Heart left ventricle (tissue), 16 donors: ENCODE measurements at regions of chr10 and their contacts with region 1.

Region 1: GRCh38 chr10:76036111-76036940 is 604.9 kb downstream of the LRMDA start:
- DNase-seq: peak; percentile 72 to 86 (median 74)
- ATAC-seq: peak; percentile 79 to 94 (median 90)
- H3K4me3 ChIP-seq: peak overlapping the region in 6 of 12 donors; percentile 25 to 49 (median 38)
- H3K27ac ChIP-seq: peak overlapping the region in 1 of 12 donors; percentile 14
- H3K4me1 ChIP-seq: peaks cover 0 to 19% (median 7%) of the 10 kb centered on the region in 12 donors
- H3K27me3 ChIP-seq: no peaks in the 10 kb centered on the region
- CTCF ChIP-seq: peak; percentile 86 to 97 (median 94)
- POLR2A ChIP-seq: no peak

Region 2: GRCh38 chr10:75395066-75395931 is 641.0 kb before region 1 on chr10:
- intact Hi-C with region 1: loop called (anchors 1 to 5 kb)
- DNase-seq: peak; percentile 40 to 82 (median 56)
- ATAC-seq: peak in 3 of 4 donors; percentile 38 to 49 (median 40)
- H3K4me3 ChIP-seq: peak overlapping the region; percentile 21 to 96 (median 60)
- H3K27ac ChIP-seq: peak overlapping the region in 11 of 12 donors; percentile 2 to 100 (median 81)
- H3K4me1 ChIP-seq: peaks cover 0 to 42% (median 13%) of the 10 kb centered on the region in 12 donors
- H3K27me3 ChIP-seq: peaks cover 0 to 23% (median 0%) of the 10 kb centered on the region in 9 donors
- CTCF ChIP-seq: peak; percentile 84 to 98 (median 92)
- POLR2A ChIP-seq: no peak

Region 3: DNA sequence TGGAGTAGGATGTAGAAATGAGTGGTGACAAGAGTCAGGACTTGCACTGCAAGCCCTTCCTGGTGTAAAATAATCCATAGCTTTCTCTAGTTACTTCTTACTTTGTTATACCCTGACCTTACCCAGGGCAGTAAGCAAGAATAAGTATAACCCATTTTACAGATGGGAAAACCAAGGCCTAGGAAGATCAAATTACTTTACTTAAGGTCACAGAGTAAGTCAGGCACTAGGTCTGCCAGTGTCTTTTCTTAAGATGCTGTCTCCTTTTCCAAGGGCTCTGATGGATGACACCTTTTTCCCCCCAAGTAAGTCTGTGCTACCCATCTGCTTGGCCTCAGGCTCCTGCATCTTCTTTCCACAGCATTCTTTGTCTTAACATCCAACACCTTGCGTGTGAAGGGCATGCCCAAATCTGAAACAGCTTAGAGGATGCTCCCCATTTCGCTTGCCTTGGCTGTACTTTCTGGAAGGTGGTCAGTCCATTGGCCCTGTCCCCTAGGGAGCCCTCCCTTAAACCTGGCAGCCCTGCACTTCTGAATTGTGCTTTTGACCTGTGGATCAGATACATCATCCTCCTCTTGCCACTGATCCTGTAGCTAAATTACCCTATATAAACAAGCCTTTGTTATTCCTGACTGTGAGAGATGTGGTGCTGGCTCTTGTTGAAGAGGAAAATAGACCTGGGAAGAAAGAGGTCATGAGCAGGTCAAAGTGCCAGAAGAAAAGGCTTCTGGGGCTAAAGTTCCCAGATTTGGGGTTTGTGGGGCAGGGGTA is 436.3 kb before region 1 on chr10:
- intact Hi-C with region 1: no loop called
- DNase-seq: no peak
- ATAC-seq: no peak
- H3K4me3 ChIP-seq: no peak overlapping the region
- H3K27ac ChIP-seq: no peak overlapping the region
- H3K4me1 ChIP-seq: peaks cover 0 to under 1% (median 0%) of the 10 kb centered on the region in 12 donors
- H3K27me3 ChIP-seq: no peaks in the 10 kb centered on the region
- CTCF ChIP-seq: no peak
- POLR2A ChIP-seq: no peak

Region 4: GRCh38 chr10:75922435-75922834 is 113.9 kb before region 1 on chr10:
- intact Hi-C with region 1: loop called in 2 of 10 experiments (anchors 10 kb)
- DNase-seq: no peak
- ATAC-seq: no peak
- H3K4me3 ChIP-seq: no peak overlapping the region
- H3K27ac ChIP-seq: no peak overlapping the region
- H3K4me1 ChIP-seq: peaks cover 0 to 16% (median 5%) of the 10 kb centered on the region in 12 donors
- H3K27me3 ChIP-seq: no peaks in the 10 kb centered on the region
- CTCF ChIP-seq: peak in 6 of 12 donors; percentile 7 to 23 (median 14)
- POLR2A ChIP-seq: no peak

Region 5: GRCh38 chr10:75972491-75973276 is 63.6 kb before region 1 on chr10:
- intact Hi-C with region 1: no loop called
- DNase-seq: no peak
- ATAC-seq: peak in 3 of 4 donors; percentile 38 to 60 (median 57)
- H3K4me3 ChIP-seq: no peak overlapping the region
- H3K27ac ChIP-seq: peak overlapping the region in 8 of 12 donors; percentile 3 to 70 (median 38)
- H3K4me1 ChIP-seq: peaks cover 0 to 21% (median 6%) of the 10 kb centered on the region in 12 donors
- H3K27me3 ChIP-seq: no peaks in the 10 kb centered on the region
- CTCF ChIP-seq: no peak
- POLR2A ChIP-seq: no peak

Region 6: GRCh38 chr10:76984559-76985443 is 948.5 kb after region 1 on chr10:
- intact Hi-C with region 1: loop called in 2 of 10 experiments (anchors 10 kb)
- DNase-seq: peak; percentile 57 to 76 (median 65)
- ATAC-seq: peak in 3 of 4 donors; percentile 72 to 89 (median 80)
- H3K4me3 ChIP-seq: no peak overlapping the region
- H3K27ac ChIP-seq: no peak overlapping the region
- H3K4me1 ChIP-seq: no peaks in the 10 kb centered on the region
- H3K27me3 ChIP-seq: no peaks in the 10 kb centered on the region
- CTCF ChIP-seq: peak; percentile 80 to 97 (median 92)
- POLR2A ChIP-seq: no peak